HAP-1 (cell line): ENCODE measurements at regions of chr10 and their contacts with region 1.

Region 1: DNA sequence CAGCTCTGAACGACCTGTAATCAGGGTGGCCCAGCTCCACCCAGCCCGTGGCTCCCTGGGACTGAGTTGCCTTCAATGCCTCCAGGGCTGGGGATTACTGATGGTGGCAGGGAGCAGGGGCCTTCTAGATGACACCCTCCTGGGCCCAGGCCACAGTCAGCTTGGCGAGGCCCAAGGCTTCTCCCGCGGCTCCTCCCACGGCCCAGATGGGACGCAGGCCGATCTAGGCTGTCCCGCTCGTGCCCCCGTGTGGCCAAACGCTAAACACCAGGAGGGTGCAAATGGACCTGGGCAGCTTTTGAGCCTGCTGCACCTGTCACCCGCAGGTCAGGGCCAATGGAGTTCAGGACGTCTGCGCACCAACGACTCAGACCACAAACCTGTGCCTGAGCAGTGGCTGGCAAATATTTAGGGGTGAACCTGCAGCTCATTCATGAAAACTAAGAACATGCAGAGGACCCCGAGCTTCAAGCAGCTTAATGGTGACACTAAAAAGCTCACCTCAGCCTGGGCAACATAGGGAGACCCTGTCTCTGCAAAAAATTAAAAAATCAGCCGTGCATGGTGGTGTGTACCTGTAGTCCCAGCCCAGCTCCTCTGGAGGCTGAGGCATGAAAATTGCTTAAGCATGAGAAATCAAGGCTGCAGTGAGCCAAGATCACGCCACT is 43.2 kb downstream of the ASB13 start:
- DNase-seq: peak; percentile 61 to 94
- H3K4me3 ChIP-seq: no peak overlapping the region
- H3K4me1 ChIP-seq: no peaks in the 10 kb centered on the region
- H3K27me3 ChIP-seq: no peaks in the 10 kb centered on the region

Region 2: DNA sequence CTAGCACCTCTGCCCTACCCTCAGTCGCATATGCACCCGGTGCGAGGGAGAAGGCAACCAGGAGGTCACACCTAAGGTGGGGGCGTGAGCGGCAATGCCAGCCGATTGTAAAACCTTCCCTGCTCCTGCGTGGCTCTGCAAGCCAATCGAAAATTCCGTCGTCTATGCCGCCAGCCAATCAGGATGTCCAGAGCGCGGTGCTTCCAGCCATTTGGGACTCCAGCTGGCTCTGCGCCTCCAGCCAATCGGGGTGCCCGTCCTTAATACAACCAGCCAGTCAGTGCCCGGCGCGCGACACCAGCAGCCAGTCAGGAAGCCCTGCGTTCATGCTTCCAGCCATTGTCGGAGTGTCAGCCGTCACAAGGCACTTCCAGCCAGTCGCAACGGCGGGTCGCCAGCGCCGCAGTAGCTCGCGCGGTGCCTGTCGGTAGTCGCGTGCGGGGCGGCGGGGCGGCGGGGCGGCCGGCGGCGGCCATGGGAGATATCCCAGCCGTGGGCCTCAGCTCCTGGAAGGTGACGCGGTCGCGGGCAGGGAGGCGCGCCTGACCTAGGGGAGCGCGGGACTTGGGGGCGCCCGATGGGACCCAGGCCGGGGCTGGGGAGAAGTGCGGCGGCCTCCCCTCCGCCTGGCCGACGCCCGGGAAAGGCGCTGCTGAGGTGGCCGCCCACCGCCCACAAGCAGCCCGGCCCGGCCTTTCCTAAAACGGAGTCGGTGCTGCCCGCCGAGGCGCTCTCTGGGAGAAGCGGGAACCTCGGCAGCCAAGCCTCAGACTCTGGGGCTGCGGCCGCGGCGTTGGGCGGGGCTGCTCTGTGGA is 797.2 kb before region 1 on chr10 and contains the start of gene AKR1E2:
- in situ Hi-C with region 1: loop called (anchors 10 kb)
- DNase-seq: peak; percentile 51 to 85
- H3K4me3 ChIP-seq: peak within 1 kb of the TSS; percentile 21
- H3K4me1 ChIP-seq: peaks cover 9% of the 10 kb centered on the region; the same call in 1 of the 2 replicates
- H3K27me3 ChIP-seq: no peaks in the 10 kb centered on the region

Region 3: DNA sequence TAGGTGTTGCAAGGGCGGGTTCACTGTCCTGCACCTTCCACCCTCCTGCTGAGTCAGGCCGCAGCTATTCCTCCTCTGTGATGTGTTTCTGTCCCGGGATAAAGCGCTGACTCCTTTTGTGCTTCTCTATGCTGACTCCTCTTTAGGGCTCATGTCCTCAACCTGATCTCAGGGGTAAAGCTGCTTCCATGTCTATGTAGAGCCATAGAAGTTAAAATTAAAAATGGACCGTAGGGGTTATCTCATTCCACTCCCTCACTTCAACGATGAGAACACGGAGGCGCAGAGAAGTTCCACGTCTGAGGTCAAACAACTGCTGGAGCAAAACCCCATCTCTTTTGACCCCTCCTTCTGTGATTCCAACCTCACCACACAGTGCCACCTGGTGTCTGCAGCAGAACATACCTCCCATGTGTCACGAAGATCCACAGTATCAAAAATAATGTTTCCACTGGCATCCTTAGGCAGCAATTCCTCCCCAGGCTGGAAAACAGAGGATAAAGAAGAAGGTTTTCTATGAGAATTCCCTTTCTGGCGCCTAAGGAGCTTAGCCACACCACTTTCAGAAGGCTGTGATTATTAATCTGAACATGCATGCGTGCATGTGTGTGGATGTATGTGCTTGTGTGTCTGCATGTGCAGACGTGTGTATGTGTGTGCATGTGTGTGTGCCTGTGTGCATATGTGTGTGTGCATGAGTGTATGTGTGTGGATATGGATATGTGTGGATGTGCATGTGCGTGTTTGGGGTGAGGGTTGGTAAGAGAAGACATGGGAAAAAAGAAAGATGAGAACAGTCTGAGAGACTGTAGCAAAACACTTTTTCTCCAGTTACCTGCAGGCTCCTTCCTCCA is 339.7 kb before region 1 on chr10:
- in situ Hi-C with region 1: loop called (anchors 10 kb)
- DNase-seq: peak; percentile 51 to 73
- H3K4me3 ChIP-seq: no peak overlapping the region
- H3K4me1 ChIP-seq: no peaks in the 10 kb centered on the region
- H3K27me3 ChIP-seq: no peaks in the 10 kb centered on the region

Region 4: DNA sequence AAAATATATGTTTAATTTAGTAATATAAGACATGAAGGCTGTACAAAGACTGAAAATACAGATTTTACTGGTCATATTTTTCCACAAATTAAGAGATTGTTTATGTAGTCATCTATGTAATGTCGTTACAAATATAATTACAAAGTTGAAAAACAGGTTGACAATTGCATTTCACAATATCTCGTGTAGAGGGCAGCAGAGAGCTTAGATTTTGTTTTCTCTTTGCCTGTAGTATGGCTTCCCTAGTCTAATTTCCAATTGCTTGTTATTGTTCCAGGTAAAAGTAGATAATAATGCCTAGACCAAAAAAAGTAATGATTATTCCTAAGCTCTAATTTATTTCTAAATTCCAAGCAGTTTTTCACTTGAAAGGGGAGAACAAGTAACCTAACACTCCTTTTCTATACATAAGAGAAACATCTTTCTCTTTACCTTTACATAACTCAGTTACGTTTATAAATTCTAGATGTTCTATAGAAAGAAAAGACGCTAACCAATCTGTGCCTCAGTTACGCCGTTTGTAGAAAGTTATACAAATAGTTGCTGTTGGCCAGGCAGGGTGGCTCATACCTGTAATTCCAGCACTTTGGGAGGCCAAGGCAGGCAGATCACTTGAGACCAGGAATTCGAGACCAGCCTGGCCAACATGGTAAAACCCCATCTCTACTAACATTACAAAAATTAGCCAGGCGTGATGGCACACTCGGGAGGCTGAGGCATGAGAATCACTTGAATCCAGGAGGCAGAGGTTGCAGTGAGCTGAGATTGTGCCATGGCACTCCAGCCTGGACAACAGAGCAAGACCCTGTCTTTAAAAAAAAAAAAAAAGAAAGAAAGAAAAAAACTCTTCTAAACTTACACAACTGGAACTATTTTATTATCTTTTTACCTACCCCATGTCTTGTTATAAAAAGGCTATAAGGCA is 180.9 kb before region 1 on chr10:
- in situ Hi-C with region 1: loop called (anchors 5 kb)
- DNase-seq: peak; percentile 42 to 47
- H3K4me3 ChIP-seq: no peak overlapping the region
- H3K4me1 ChIP-seq: peaks cover 9% of the 10 kb centered on the region
- H3K27me3 ChIP-seq: no peaks in the 10 kb centered on the region